AG04450 (cell line): ENCODE measurements at regions of chr6 and their contacts with region 1.

Region 1: DNA sequence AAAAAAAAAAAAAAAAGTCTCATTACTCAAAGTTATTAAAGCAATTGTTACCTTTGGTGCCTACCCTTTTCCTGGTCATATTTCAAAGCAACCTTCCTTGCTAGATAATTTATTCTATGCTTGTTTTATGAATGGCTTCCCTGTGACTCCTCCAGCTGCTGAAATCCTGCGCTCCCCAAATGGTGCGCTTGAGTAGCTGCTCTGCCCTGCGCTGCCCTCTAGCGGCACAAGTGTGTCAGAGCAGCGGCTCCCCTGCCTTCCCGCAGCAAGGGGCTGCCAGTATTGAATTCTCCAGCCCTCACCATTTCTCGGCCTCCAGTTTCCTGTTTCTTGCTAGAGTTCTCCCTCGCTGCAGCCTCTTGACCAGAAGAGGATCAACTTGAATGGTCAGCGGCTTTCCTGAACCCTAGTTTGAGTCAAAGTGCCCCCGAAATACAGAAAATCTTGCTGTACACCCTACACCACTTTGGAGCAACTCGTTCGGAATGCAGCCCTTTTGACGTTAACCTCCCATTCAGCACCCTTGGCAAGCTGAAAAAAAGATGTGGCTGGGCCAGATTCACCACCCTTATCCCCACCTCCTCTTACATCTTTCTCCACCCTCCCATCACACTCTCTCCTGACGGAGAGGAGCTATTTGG is 60.4 kb upstream of the KLHL31 start:
- DNase-seq: peak; percentile 57
- H3K4me3 ChIP-seq: no peak overlapping the region
- H3K27ac ChIP-seq: no peak overlapping the region
- H3K27me3 ChIP-seq: no peaks in the 10 kb centered on the region
- CTCF ChIP-seq: peak; percentile 97

Region 2: DNA sequence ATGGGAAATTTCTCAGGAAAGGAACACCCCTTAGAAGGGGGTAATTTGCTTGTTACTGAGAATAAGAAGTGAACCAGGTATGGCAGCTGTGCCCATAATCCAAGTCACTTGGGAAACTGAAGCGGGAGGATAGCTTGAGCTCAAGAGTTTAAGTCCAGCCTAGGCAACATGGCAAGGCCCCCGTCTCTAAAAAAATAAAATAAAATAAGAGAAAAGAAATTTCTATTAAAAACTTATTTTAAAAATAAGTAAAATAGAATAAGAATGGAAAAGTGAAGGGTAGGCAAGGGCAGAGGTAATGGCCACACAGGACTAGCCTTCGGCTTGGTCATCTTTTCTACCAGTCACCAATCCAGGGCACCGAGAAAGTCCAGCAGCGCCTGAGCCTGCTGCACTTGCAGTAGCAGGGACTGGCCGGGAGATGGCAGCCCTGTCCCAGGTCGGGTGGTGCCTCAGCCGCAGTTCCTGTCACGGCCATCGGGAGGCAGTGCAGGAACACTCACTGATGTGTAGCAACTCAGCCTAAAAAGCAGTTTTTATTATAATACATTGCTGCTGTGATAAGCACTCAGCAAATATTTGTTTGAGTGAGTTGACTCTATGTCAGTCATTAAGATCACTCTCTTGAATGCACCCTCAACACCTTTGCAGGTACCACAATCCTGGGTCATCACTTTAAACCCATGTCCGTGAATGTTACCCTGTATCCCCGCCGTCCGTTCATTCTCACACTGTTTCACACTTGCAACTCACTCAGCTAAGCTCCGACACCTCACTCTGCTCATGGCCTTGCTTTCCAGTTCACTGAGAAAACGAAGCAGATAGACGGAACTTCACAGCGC is 554.1 kb before region 1 on chr6:
- CTCF ChIA-PET with region 1: interaction called, 14 read pairs
- POLR2A ChIA-PET with region 1: no interaction called
- DNase-seq: peak; percentile 55
- H3K4me3 ChIP-seq: no peak overlapping the region
- H3K27ac ChIP-seq: no peak overlapping the region
- H3K27me3 ChIP-seq: no peaks in the 10 kb centered on the region
- CTCF ChIP-seq: peak; percentile 100

Region 3: GRCh38 chr6:53504512-53504911 is 221.4 kb before region 1 on chr6:
- CTCF ChIA-PET with region 1: interaction called, 13 read pairs
- POLR2A ChIA-PET with region 1: no interaction called
- DNase-seq: no peak
- H3K4me3 ChIP-seq: no peak overlapping the region
- H3K27ac ChIP-seq: no peak overlapping the region
- H3K27me3 ChIP-seq: no peaks in the 10 kb centered on the region
- CTCF ChIP-seq: no peak

Region 4: DNA sequence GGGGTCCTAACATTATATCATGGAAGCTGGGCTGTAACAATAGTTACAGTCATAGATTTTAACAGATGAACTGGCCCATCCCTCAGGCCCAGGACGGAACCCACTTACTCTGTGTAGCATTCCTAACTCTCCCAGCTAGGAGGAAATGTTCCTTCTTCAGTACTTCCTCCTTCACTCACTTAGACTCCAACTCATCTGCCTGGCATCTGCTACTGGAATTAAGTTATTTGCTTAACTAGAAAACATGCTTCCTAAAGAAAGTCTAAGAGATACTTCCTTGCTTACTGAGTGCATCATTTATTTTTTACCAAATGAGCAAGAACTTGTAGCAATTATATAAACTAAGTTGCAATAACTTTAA is 201.5 kb before region 1 on chr6:
- CTCF ChIA-PET with region 1: interaction called, 20 read pairs
- POLR2A ChIA-PET with region 1: no interaction called
- DNase-seq: no peak
- H3K4me3 ChIP-seq: no peak overlapping the region
- H3K27ac ChIP-seq: no peak overlapping the region
- H3K27me3 ChIP-seq: no peaks in the 10 kb centered on the region
- CTCF ChIP-seq: 0 out of 2 replicates have a peak, but pooled peaks have one; percentile 5

Region 5: GRCh38 chr6:53651764-53652401 is 74.0 kb before region 1 on chr6:
- CTCF ChIA-PET with region 1: interaction called, 38 read pairs
- POLR2A ChIA-PET with region 1: no interaction called
- DNase-seq: no peak
- H3K4me3 ChIP-seq: peak overlapping the region; percentile 75
- H3K27ac ChIP-seq: no peak overlapping the region
- H3K27me3 ChIP-seq: no peaks in the 10 kb centered on the region
- CTCF ChIP-seq: peak; percentile 24

Region 6: DNA sequence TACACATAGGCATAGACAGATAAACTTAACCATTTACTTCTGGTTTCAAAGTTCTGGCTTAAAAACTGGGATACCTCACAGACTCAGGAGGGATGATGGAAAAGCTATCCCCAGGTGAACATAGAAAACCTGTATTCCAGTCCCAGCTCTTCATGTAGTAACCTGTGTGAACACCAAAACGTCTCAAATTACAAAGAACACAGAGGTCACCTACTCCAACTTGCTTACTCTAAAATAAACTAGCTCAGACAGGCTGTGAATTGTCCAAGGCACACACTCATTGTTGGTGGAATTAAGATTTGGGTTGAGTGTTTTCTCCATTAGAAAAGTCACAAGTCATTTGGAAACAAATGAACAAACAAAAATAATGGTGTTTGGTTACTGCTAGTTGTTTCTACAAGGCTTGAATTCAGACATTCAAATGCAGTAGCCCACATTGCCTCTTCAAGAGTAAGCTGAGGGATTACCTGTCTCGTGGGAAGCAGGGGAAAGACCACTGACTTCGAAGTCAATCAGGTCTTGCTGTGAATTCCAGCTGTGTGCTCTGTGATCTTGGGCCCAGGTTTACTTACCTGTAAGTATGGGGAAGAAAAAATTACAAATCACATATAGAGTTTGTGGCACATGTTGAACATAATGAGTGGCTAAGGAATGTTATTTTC is 20.7 kb after region 1 on chr6:
- CTCF ChIA-PET with region 1: interaction called, 30 read pairs
- POLR2A ChIA-PET with region 1: no interaction called
- DNase-seq: no peak
- H3K4me3 ChIP-seq: no peak overlapping the region
- H3K27ac ChIP-seq: no peak overlapping the region
- H3K27me3 ChIP-seq: no peaks in the 10 kb centered on the region
- CTCF ChIP-seq: no peak

Region 7: GRCh38 chr6:53825532-53826321 is 99.8 kb after region 1 on chr6:
- CTCF ChIA-PET with region 1: interaction called, 11 read pairs
- POLR2A ChIA-PET with region 1: no interaction called
- DNase-seq: no peak
- H3K4me3 ChIP-seq: no peak overlapping the region
- H3K27ac ChIP-seq: no peak overlapping the region
- H3K27me3 ChIP-seq: no peaks in the 10 kb centered on the region
- CTCF ChIP-seq: no peak